Activated T-helper 2 cell treated with anti-CD3 and anti-CD28 coated beads, Interferon-gamma antibody, Interleukin-2, Interleukin-4, amounts not matched to agents 10 μg/mL and 5 μg/mL and 100 μg/mL, durations not matched to agents 14 hours and 24 hours and 36 hours (primary cell): ENCODE measurements at regions of chr15 and their contacts with region 1.

Region 1: DNA sequence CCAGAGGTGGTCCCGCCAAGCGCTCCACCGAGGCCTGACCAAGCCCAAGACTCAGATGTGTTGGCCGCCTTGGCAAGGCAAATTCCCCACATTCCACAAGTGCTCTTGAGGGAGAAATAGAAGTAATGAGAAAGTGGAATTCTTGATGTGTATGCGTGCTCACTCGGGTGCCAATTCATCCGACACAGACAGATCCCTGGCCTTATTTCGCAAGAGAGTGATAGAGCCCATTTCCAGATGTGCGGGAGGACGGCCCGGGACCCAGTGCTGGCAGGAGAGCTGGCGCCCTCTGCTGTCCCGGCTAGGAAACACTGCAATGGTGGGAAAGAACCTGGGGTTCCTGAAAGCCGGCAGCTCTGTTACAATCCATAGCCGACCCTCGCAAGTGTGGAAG is 76.0 kb downstream of the HMG20A start:
- DNase-seq: peak; percentile 52
- H3K4me3 Mint-ChIP-seq: no peak overlapping the region
- H3K27ac Mint-ChIP-seq: no peak overlapping the region
- H3K4me1 Mint-ChIP-seq: peaks cover 15% of the 10 kb centered on the region
- H3K27me3 Mint-ChIP-seq: no peaks in the 10 kb centered on the region

Region 2: DNA sequence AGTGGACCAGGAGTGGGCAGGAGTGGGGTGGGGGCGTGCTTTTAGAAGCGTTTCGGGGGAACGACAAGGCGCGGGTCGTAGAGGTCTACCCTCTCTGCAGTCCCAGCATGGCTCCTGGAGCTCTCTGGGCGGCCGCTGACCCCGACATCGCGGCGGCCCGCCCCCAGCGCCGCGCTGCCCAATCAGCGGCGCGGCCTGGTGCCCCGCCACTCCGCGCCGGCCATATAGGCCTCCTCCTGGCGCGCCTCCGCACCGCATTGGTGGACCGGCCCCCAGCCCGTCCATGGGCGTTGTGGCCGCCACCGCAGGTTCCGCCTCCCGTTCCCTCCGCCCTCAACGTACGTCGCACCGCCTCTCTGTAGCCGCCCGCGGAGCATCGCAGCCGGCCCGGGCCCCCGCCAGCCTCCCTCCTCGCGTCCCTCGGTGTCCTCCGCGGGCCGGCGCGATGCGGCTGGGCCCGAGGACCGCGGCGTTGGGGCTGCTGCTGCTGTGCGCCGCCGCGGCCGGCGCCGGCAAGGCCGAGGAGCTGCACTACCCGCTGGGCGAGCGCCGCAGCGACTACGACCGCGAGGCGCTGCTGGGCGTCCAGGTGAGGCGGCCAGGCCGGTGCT is 565.2 kb before region 1 on chr15 and contains the start of gene RCN2:
- intact Hi-C with region 1: loop called (anchors 10 kb)
- DNase-seq: peak; percentile 93
- H3K4me3 Mint-ChIP-seq: peak within 1 kb of the TSS; percentile 85
- H3K27ac Mint-ChIP-seq: peak within 1 kb of the TSS; percentile 85
- H3K4me1 Mint-ChIP-seq: peaks cover 26% of the 10 kb centered on the region
- H3K27me3 Mint-ChIP-seq: peaks cover 14% of the 10 kb centered on the region
- total RNA-seq, gene RCN2: 35.7 and 36.1 TPM in 2 replicates

Region 3: DNA sequence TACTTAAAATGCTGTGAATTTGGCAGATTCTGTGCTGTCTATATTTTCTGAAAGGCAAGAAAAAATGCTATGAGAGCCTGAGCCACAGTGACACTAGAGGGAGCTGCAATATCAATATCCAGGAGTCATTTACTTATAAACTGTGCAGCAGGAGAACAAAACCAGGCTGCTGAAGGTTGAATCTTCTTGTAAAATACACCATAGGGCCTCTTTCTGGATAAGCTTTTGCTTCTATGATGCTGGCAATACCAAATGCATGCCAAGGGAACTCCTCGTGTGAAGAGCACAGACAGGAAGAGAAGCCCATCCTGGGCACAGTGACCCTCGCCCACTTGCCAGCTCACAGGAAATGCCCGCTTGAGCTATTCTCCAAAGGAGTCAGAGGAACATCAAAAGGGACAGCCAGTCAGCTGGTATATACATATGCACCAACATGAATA is 377.8 kb before region 1 on chr15:
- intact Hi-C with region 1: loop called (anchors 2 kb)
- DNase-seq: no peak
- H3K4me3 Mint-ChIP-seq: no peak overlapping the region
- H3K27ac Mint-ChIP-seq: no peak overlapping the region
- H3K4me1 Mint-ChIP-seq: peaks cover 14% of the 10 kb centered on the region
- H3K27me3 Mint-ChIP-seq: no peaks in the 10 kb centered on the region

Region 4: DNA sequence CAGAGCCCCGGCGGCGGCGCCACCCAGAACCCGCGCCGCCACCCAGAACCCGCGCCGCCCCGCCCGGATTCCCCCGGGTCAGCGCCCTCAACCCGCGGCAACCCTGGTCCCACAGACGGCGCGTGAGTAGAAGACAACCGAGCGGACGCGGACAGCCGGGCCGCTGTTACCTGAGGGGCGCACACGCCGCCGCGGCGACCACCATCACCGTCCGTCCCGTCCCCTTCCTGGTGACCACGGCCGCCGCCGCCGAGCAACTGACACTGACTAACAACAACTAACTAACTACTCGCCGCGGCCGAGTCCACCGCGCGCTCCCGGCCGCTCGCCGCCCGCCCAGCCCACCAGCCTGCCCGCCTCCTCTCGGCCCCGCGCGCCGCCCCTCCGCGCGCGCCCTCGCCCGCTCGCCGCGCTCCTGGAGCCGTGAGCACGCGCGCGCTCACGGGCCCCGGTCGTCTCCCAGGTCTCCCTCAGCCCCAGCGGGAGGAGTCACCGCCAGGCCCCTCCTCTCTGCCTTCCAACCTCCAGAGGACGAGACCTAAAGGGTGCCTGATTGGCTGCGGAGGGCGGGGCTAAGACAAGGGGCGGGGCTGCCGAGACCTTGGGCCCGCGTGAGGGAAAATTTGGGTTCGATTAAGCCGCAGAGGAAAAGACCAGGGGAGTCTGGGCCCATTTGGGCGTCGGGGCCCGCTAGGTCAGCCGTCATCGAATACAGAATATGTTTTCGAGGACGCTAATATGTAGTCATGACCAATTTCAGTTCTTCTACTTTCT is 76.7 kb before region 1 on chr15 and contains the start of gene PEAK1:
- intact Hi-C with region 1: loop called (anchors 5 kb)
- DNase-seq: peak; percentile 98
- H3K4me3 Mint-ChIP-seq: peak within 1 kb of the TSS; percentile 96
- H3K27ac Mint-ChIP-seq: peak within 1 kb of the TSS; percentile 97
- H3K4me1 Mint-ChIP-seq: peaks cover 35% of the 10 kb centered on the region
- H3K27me3 Mint-ChIP-seq: no peaks in the 10 kb centered on the region
- total RNA-seq, gene PEAK1: 26.0 and 27.0 TPM in 2 replicates

Region 5: GRCh38 chr15:77543159-77543882 is 46.6 kb after region 1 on chr15:
- intact Hi-C with region 1: loop called (anchors 5 kb)
- DNase-seq: peak; percentile 66
- H3K4me3 Mint-ChIP-seq: peak overlapping the region; percentile 73
- H3K27ac Mint-ChIP-seq: no peak overlapping the region
- H3K4me1 Mint-ChIP-seq: peaks cover 5% of the 10 kb centered on the region
- H3K27me3 Mint-ChIP-seq: peaks cover 9% of the 10 kb centered on the region